ENCODE measurements at regions of chr6 and their contacts with region 1.

Region 1: GRCh38 chr6:36692220-36692619 is 5.4 kb upstream of the RAB44 start:
- DNase-seq: peak; percentile 48
- H3K4me3 Mint-ChIP-seq: no peak overlapping the region
- H3K27ac Mint-ChIP-seq: peak overlapping the region; percentile 66
- H3K4me1 Mint-ChIP-seq: peaks cover 66% of the 10 kb centered on the region
- H3K27me3 Mint-ChIP-seq: no peaks in the 10 kb centered on the region

Region 2: DNA sequence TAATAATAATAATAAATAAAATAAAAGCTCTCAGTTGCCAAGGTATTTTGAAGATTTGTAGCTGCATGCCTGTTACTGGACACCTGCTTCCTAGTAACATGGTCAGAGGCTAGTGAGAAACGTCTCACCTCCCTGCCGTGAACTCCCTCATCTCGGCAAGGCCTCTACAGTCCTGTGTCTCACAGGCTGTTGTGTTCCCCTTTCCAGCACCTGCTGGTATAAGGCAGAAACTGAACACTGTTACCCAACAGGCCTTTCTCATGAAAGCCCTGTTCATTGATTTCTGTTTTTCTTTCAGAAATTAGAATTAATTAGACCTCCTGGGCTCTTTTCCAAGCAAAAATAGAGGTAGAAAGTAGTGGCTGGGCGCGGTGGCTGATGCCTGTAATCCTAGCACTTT is 115.7 kb before region 1 on chr6:
- intact Hi-C with region 1: no loop called
- DNase-seq: no peak
- H3K4me3 Mint-ChIP-seq: no peak overlapping the region
- H3K27ac Mint-ChIP-seq: no peak overlapping the region
- H3K4me1 Mint-ChIP-seq: no peaks in the 10 kb centered on the region
- H3K27me3 Mint-ChIP-seq: no peaks in the 10 kb centered on the region

Region 3: GRCh38 chr6:36735110-36736071 is 43.2 kb after region 1 on chr6:
- intact Hi-C with region 1: loop called (anchors 1 kb)
- DNase-seq: peak; percentile 54
- H3K4me3 Mint-ChIP-seq: peak overlapping the region; percentile 67
- H3K27ac Mint-ChIP-seq: peak overlapping the region; percentile 89
- H3K4me1 Mint-ChIP-seq: peaks cover 41% of the 10 kb centered on the region
- H3K27me3 Mint-ChIP-seq: no peaks in the 10 kb centered on the region